Left colon (tissue), 2 donors: ENCODE measurements at regions of chr1 and their contacts with region 1.

Region 1: DNA sequence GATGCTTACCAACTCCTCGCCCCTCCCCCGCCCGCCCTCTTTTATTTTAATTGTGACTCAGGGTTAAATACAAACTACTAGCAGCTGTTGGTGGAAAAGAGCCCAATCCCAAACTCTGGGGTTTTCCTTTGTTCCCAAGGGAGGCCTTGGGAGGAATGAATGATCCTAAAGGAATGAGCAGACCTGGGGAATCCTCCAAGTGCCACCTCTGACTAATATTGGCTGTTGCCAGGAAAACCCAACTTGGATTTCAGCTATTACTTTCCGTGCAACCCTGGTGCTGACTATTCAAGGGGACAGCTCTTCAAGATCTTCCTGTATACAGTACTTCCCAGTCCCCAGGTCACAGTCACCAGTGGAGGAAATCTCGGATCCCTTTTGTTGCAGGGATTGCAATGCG is 1.3 kb upstream of the S100A10 start:
- DNase-seq: no peak
- ATAC-seq: no peak

Region 2: GRCh38 chr1:151888972-151889570 is 105.9 kb before region 1 on chr1:
- intact Hi-C with region 1: no loop called
- DNase-seq: no peak
- ATAC-seq: peak; percentile 55

Region 3: DNA sequence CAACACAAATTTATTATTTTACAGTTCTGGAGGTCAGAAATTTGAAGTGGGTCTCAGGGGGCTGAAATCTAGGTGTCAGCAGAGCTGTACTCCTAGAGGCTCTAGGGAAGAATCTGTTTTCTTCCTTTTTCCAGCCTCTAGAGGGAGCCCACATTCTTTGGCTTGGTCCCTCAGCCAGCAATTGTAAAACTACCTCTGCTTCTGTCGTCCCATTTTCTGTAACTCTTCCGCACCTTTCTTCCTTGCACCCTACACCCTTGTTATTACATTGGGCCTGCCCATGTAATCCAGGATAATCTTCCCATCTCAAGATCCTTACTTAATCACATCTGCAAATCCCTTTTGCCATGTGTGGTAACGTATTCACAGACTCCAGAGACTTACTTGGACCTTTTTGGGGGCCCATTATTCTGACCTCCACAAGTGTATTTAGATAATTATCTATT is 60.9 kb before region 1 on chr1:
- intact Hi-C with region 1: loop called in 1 of 2 experiments (anchors 5 kb)
- DNase-seq: no peak
- ATAC-seq: peak; percentile 73